ENCODE measurements at regions of chr7 and their contacts with region 1.

Region 1: GRCh38 chr7:157875230-157876179 is 538.7 kb downstream of the DNAJB6 start:
- DNase-seq: peak; percentile 20 to 77 (median 49)
- ATAC-seq: peak; percentile 80
- H3K4me3 ChIP-seq: peak overlapping the region; percentile 48
- H3K4me3 Mint-ChIP-seq: peak overlapping the region; percentile 87
- H3K27ac ChIP-seq: peak overlapping the region in 1 of 2 donors; percentile 1
- H3K27ac Mint-ChIP-seq: peak overlapping the region; percentile 87
- H3K4me1 ChIP-seq: peaks cover 47% of the 10 kb centered on the region
- H3K4me1 Mint-ChIP-seq: peaks cover 37% of the 10 kb centered on the region
- H3K27me3 ChIP-seq: peaks cover 0 to 3% of the 10 kb centered on the region in 2 experiments
- H3K27me3 Mint-ChIP-seq: no peaks in the 10 kb centered on the region
- CTCF ChIP-seq: peak; percentile 73

Region 2: GRCh38 chr7:157318012-157318709 is 557.3 kb before region 1 on chr7:
- CTCF ChIA-PET with region 1: no interaction called
- POLR2A ChIA-PET with region 1: no interaction called
- intact Hi-C with region 1: no loop called
- DNase-seq: peak in 3 of 14 experiments; percentile 13 to 67 (median 55)
- ATAC-seq: no peak
- H3K4me3 ChIP-seq: no peak overlapping the region
- H3K4me3 Mint-ChIP-seq: no peak overlapping the region
- H3K27ac ChIP-seq: no peak overlapping the region
- H3K27ac Mint-ChIP-seq: no peak overlapping the region
- H3K4me1 ChIP-seq: no peaks in the 10 kb centered on the region
- H3K4me1 Mint-ChIP-seq: no peaks in the 10 kb centered on the region
- H3K27me3 ChIP-seq: no peaks in the 10 kb centered on the region
- H3K27me3 Mint-ChIP-seq: no peaks in the 10 kb centered on the region
- CTCF ChIP-seq: no peak

Region 3: DNA sequence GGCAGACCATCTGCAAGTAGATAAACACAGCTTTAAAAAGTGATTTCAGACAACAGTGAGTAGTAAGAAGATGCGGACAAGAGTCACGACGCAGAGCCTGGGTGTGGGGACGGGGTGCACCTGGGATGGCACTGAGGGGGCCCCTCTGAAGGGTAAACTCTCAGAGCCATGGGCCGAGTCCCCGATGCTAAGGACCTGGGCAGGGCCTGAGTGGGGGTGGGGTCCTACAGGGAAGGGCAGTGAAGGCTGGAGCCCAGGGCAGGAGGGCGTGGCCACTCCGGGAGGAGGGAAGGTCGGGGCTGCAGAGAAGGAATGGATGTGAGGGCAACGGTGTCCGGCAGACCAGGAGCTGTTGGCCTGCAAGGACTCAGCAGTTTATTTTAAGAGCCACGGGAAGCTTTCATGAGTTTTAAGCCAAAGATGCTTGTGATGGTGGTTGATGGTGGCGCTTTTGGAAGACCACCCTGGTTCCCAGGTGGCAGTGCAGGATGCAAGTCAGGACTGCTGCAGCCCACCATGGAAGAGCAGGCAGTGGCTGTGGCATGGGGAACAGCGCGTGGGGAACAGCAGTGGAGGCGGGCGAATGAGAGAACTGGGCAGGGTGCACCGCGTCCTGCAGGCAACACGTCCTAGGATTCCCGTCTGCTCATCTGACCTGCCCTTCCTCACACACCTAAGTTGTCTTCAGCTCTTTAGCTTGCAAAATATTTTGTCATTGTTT is 241.9 kb before region 1 on chr7:
- CTCF ChIA-PET with region 1: no interaction called
- POLR2A ChIA-PET with region 1: no interaction called
- intact Hi-C with region 1: loop called in 1 of 2 experiments (anchors 10 kb)
- DNase-seq: no peak
- ATAC-seq: no peak
- H3K4me3 ChIP-seq: no peak overlapping the region
- H3K4me3 Mint-ChIP-seq: no peak overlapping the region
- H3K27ac ChIP-seq: no peak overlapping the region
- H3K27ac Mint-ChIP-seq: no peak overlapping the region
- H3K4me1 ChIP-seq: peaks cover 8% of the 10 kb centered on the region
- H3K4me1 Mint-ChIP-seq: peaks cover 9% of the 10 kb centered on the region
- H3K27me3 ChIP-seq: peaks cover 3% of the 10 kb centered on the region in 2 experiments
- H3K27me3 Mint-ChIP-seq: peaks cover 14% of the 10 kb centered on the region
- CTCF ChIP-seq: no peak

Region 4: GRCh38 chr7:157851501-157852067 is 23.9 kb before region 1 on chr7:
- CTCF ChIA-PET with region 1: no interaction called
- POLR2A ChIA-PET with region 1: interaction called, 14 read pairs
- intact Hi-C with region 1: no loop called
- DNase-seq: peak; percentile 58 to 84 (median 76)
- ATAC-seq: peak; percentile 98
- H3K4me3 ChIP-seq: peak overlapping the region; percentile 41
- H3K4me3 Mint-ChIP-seq: peak overlapping the region; percentile 57
- H3K27ac ChIP-seq: peak overlapping the region; percentile 51 to 64
- H3K27ac Mint-ChIP-seq: peak overlapping the region; percentile 88
- H3K4me1 ChIP-seq: peaks cover 13% of the 10 kb centered on the region
- H3K4me1 Mint-ChIP-seq: peaks cover 12% of the 10 kb centered on the region
- H3K27me3 ChIP-seq: no peaks in the 10 kb centered on the region
- H3K27me3 Mint-ChIP-seq: no peaks in the 10 kb centered on the region
- CTCF ChIP-seq: no peak

Region 5: GRCh38 chr7:157926107-157926506 is 50.6 kb after region 1 on chr7:
- CTCF ChIA-PET with region 1: no interaction called
- POLR2A ChIA-PET with region 1: no interaction called
- intact Hi-C with region 1: no loop called
- DNase-seq: no peak
- ATAC-seq: peak; percentile 11
- H3K4me3 ChIP-seq: no peak overlapping the region
- H3K4me3 Mint-ChIP-seq: peak overlapping the region; percentile 49
- H3K27ac ChIP-seq: no peak overlapping the region
- H3K27ac Mint-ChIP-seq: peak overlapping the region; percentile 24
- H3K4me1 ChIP-seq: peaks cover 8% of the 10 kb centered on the region
- H3K4me1 Mint-ChIP-seq: peaks cover 15% of the 10 kb centered on the region
- H3K27me3 ChIP-seq: no peaks in the 10 kb centered on the region
- H3K27me3 Mint-ChIP-seq: peaks cover 5% of the 10 kb centered on the region
- CTCF ChIP-seq: no peak